Heart right ventricle (tissue), 16 donors: ENCODE measurements at regions of chr11 and their contacts with region 1.

Region 1: DNA sequence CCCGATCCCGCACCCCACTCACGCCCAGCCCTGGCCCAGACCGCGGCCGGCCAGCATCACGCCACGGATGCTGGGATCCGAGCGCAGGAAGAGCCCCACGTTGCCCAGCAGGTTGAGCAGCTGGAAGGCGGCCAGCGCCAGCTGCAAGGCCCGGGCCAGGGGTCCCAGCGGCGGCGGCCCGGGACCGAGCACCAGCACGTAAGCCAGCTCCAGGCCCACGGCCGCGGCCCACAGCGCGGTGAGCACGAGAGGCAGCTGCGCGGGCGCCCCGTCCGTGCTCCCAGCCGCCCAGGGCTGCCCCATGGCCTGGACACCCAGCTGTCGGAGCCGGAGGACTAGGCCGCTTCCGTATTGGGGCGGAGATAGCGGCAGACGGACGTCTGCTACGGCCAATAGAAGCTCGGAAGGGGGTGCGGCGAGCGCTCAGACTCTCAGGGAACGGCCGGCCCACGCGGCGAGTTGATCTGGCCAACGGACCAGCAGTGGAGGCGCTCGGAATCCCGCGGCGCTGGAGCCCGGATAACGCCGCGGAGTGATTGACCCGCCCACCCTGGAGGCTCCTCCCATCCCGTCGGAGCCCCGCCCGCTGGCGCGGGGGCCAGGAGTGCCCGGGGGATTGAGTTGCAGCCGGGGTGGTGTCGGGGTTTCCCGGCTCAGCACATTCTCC is at the start of gene ZDHHC24:
- DNase-seq: peak; percentile 97 to 98
- ATAC-seq: peak; percentile 96 to 98 (median 97)
- H3K4me3 ChIP-seq: peak within 1 kb of the TSS; percentile 67 to 98 (median 86)
- H3K27ac ChIP-seq: peak within 1 kb of the TSS in 9 of 10 donors; percentile 65 to 94 (median 73)
- H3K4me1 ChIP-seq: peaks cover 3 to 46% (median 31%) of the 10 kb centered on the region in 9 donors
- H3K27me3 ChIP-seq: no peaks in the 10 kb centered on the region
- CTCF ChIP-seq: no peak
- total RNA-seq, gene ZDHHC24: 4.6 to 8.4 (median 5.4) TPM

Region 2: DNA sequence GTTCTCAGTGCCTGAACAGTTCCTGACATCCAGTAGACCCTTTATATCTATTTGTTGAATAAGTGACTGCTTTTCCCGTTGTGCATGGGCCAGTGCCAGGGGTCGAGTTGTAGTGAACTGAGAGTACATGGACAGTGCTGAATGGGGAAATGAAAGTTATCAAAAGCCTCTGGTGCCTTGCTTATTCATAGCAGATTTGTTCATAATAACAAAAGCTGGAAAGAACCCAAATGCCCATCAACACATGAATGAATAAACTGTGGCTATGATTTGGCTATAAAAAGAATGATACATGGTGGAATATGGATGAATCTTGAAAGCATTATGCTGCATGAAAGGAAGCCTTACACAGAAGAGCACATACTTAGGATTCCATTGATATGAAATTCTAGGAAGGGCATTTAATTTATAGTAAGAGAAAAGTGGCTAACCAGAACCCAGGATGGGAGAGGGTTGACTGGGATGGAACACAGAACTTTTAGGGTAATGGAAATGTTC is 433.2 kb before region 1 on chr11:
- intact Hi-C with region 1: no loop called
- DNase-seq: peak; percentile 17
- ATAC-seq: peak in 7 of 8 donors; percentile 42 to 66 (median 58)
- H3K4me3 ChIP-seq: no peak overlapping the region
- H3K27ac ChIP-seq: peak overlapping the region in 6 of 10 donors; percentile 11 to 63 (median 26)
- H3K4me1 ChIP-seq: peaks cover 0 to 86% (median 44%) of the 10 kb centered on the region in 9 donors
- H3K27me3 ChIP-seq: no peaks in the 10 kb centered on the region
- CTCF ChIP-seq: no peak

Region 3: GRCh38 chr11:66317723-66318599 is 227.9 kb before region 1 on chr11:
- intact Hi-C with region 1: no loop called
- DNase-seq: peak in 1 of 2 donors; percentile 63
- ATAC-seq: peak in 7 of 8 donors; percentile 4 to 43 (median 14)
- H3K4me3 ChIP-seq: peak overlapping the region in 6 of 10 donors; percentile 54 to 76 (median 62)
- H3K27ac ChIP-seq: peak overlapping the region; percentile 77 to 92 (median 86)
- H3K4me1 ChIP-seq: peaks cover 15 to 62% (median 34%) of the 10 kb centered on the region in 9 donors
- H3K27me3 ChIP-seq: peaks cover 0 to 6% (median 0%) of the 10 kb centered on the region in 7 donors
- CTCF ChIP-seq: no peak

Region 4: GRCh38 chr11:66510271-66510989 is 35.4 kb before region 1 on chr11 and contains the start of gene BBS1:
- intact Hi-C with region 1: loop called in 1 of 10 experiments (anchors 1 kb)
- DNase-seq: peak; percentile 83 to 89
- ATAC-seq: peak; percentile 94 to 98 (median 96)
- H3K4me3 ChIP-seq: peak within 1 kb of the TSS; percentile 63 to 100 (median 79)
- H3K27ac ChIP-seq: peak within 1 kb of the TSS in 9 of 10 donors; percentile 30 to 79 (median 64)
- H3K4me1 ChIP-seq: peaks cover 0 to 23% (median 13%) of the 10 kb centered on the region in 9 donors
- H3K27me3 ChIP-seq: no peaks in the 10 kb centered on the region
- CTCF ChIP-seq: peak in 3 of 9 donors; percentile 10 to 23 (median 11)
- total RNA-seq, gene BBS1: 14.5 to 23.9 (median 18.1) TPM

Region 5: GRCh38 chr11:66568124-66568916 is 22.5 kb after region 1 on chr11 and contains the start of gene CTSF:
- intact Hi-C with region 1: loop called in 1 of 10 experiments (anchors 2 kb)
- DNase-seq: peak; percentile 85 to 91
- ATAC-seq: peak; percentile 89 to 98 (median 96)
- H3K4me3 ChIP-seq: peak within 1 kb of the TSS; percentile 41 to 94 (median 70)
- H3K27ac ChIP-seq: peak within 1 kb of the TSS in 7 of 10 donors; percentile 17 to 61 (median 50)
- H3K4me1 ChIP-seq: peaks cover 3 to 14% (median 13%) of the 10 kb centered on the region in 9 donors
- H3K27me3 ChIP-seq: peaks cover 0 to 22% (median 0%) of the 10 kb centered on the region in 7 donors
- CTCF ChIP-seq: no peak
- total RNA-seq, gene CTSF: 29.1 to 75.5 (median 51.3) TPM

Region 6: DNA sequence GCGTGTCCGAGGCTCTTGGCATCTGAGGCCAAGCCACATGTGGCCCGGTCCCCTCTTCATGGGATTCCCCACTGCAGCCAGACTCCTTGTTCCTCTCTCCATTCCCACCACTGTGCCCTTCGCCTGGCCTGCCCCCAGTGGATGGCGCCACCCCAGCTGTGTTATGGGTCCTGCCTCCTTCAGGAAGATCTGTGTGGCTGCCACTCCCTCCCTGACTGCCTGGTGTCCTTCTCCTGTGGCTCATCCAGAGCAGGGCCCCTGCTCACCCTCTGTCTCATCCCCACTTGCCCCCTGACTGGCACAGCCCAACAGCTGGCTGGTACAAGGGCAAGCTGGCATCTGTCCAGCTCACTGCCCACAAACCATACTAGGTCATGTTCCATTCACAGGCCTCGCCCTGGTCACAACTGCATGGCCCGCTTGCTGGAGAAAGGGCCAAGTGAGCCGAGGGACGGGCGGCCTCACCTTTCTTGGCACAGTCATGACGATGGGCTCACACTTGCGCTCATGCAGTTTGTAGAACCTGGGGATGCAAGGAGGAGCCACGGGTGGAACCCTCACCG is 893.6 kb after region 1 on chr11:
- intact Hi-C with region 1: loop called in 1 of 10 experiments (anchors 10 kb)
- DNase-seq: no peak
- ATAC-seq: peak in 2 of 8 donors; percentile 1 to 3
- H3K4me3 ChIP-seq: peak overlapping the region in 1 of 10 donors; percentile 59
- H3K27ac ChIP-seq: peak overlapping the region in 8 of 10 donors; percentile 28 to 93 (median 50)
- H3K4me1 ChIP-seq: peaks cover 14 to 66% (median 45%) of the 10 kb centered on the region in 9 donors
- H3K27me3 ChIP-seq: no peaks in the 10 kb centered on the region
- CTCF ChIP-seq: peak in 4 of 9 donors; percentile 14 to 23 (median 21)